ENCODE measurements at regions of chr9 and their contacts with region 1.

Region 1: GRCh38 chr9:21608200-21608599 is 126.1 kb upstream of the IFNE start:
- DNase-seq: no peak
- H3K4me3 ChIP-seq: no peak overlapping the region
- H3K27ac ChIP-seq: no peak overlapping the region
- H3K4me1 ChIP-seq: no peaks in the 10 kb centered on the region
- H3K27me3 ChIP-seq: no peaks in the 10 kb centered on the region
- CTCF ChIP-seq: no peak
- POLR2A ChIP-seq: no peak

Region 2: GRCh38 chr9:21567926-21568325 is 40.3 kb before region 1 on chr9:
- intact Hi-C with region 1: loop called (anchors 2 kb)
- DNase-seq: no peak
- H3K4me3 ChIP-seq: no peak overlapping the region
- H3K27ac ChIP-seq: no peak overlapping the region
- H3K4me1 ChIP-seq: no peaks in the 10 kb centered on the region
- H3K27me3 ChIP-seq: no peaks in the 10 kb centered on the region
- CTCF ChIP-seq: no peak
- POLR2A ChIP-seq: no peak

Measured in vagina (tissue), 2 donors.